Activated B cell treated with CpG ODN at 0.5 μM for 24 hours (primary cell): ENCODE measurements at regions of chr4 and their contacts with region 1.

Region 1: GRCh38 chr4:122930862-122931261 is 8.5 kb upstream of the NUDT6 start:
- DNase-seq: no peak
- ATAC-seq: no peak
- H3K4me3 Mint-ChIP-seq: no peak overlapping the region
- H3K27ac Mint-ChIP-seq: no peak overlapping the region
- H3K4me1 Mint-ChIP-seq: no peaks in the 10 kb centered on the region
- H3K27me3 Mint-ChIP-seq: no peaks in the 10 kb centered on the region
- CTCF ChIP-seq: peak; percentile 16

Region 2: DNA sequence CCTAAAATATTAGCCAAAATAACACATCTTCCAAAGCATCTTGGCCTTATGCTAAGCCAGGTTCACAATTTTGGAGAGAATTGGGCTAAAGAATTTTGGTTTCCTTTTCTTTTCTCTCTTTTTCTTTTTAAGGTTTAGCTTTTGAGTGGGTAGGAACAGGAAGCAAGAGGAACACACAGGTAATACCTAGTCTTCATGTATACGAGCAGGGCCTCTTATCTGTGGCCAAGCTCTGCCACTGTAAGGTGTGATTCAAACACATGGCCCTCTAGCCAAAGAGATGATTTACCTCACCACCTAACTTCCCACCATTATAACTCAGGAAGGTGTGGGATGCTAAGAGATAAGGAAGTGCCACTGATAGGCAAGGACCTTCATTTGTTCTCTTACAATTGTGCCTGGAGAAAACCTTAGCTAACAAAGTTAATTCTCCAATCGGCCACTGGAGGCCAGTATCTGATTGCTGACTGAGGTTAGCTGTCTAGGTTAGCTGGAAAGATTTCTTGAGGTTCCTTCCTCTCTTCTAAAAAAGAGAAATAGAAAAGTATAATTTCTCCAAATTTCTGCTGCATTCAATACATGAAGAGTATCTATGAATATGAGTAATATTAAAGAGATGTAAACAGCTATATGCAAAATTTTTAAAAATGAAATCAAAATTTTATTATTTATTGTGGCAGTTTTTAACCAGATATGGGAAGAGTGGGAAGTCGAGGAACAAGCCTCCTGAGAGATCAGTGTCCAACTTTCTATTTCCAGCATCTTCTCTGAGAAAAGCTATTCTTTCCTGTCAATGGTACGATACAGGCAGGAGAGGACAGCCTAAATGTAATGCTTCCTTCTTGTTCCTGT is 1030.5 kb before region 1 on chr4:
- CTCF ChIA-PET with region 1: interaction called, 6 read pairs
- POLR2A ChIA-PET with region 1: no interaction called
- intact Hi-C with region 1: loop called (anchors 1 kb)
- DNase-seq: no peak
- ATAC-seq: peak; percentile 56
- H3K4me3 Mint-ChIP-seq: no peak overlapping the region
- H3K27ac Mint-ChIP-seq: no peak overlapping the region
- H3K4me1 Mint-ChIP-seq: peaks cover 4% of the 10 kb centered on the region
- H3K27me3 Mint-ChIP-seq: peaks cover 11% of the 10 kb centered on the region
- CTCF ChIP-seq: no peak

Region 3: GRCh38 chr4:122309988-122310626 is 620.8 kb before region 1 on chr4:
- CTCF ChIA-PET with region 1: no interaction called
- POLR2A ChIA-PET with region 1: no interaction called
- intact Hi-C with region 1: loop called (anchors 2 kb)
- DNase-seq: no peak
- ATAC-seq: no peak
- H3K4me3 Mint-ChIP-seq: no peak overlapping the region
- H3K27ac Mint-ChIP-seq: no peak overlapping the region
- H3K4me1 Mint-ChIP-seq: no peaks in the 10 kb centered on the region
- H3K27me3 Mint-ChIP-seq: no peaks in the 10 kb centered on the region
- CTCF ChIP-seq: no peak

Region 4: DNA sequence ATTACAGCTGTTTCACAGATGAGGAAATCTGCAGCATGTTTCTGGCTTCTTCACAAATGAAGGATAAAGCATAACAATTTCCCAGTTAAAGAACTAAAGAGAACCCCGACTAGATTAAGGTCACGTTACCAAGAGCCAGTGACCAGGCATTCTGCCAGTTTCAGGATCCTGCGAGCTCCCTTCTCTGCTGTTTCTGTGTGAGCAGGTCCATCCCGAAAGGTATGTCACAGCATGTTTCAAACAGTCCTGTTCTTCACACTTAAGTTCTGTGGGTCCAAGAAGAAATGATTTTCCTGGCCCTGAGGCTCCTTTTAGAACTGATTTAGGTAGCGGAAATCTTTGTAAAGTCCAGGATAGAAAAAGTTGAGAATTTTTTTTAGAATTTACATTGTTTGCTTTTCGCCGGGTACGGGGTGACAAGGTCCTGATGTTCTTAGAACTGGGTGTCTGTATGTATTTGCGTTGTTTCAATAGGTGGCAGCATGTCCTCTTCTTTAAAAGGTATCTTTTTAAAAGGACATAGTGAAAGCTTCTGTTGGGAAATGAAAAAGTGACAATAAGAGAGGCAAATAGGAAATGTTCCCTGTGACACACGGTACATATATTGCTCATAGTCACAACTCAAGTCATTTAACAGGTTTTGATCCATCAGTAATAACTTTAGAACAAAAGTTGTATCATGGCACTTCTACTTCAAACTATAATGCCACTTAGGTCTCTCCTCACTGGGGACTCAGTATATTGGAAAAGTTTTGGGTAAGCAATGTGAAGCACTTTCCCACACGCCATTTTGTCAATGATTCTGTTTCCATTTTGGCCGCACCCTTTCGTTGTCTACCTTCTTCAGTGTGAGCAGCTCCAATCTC is 328.4 kb before region 1 on chr4:
- CTCF ChIA-PET with region 1: no interaction called
- POLR2A ChIA-PET with region 1: no interaction called
- intact Hi-C with region 1: loop called (anchors 2 kb)
- DNase-seq: no peak
- ATAC-seq: no peak
- H3K4me3 Mint-ChIP-seq: no peak overlapping the region
- H3K27ac Mint-ChIP-seq: no peak overlapping the region
- H3K4me1 Mint-ChIP-seq: no peaks in the 10 kb centered on the region
- H3K27me3 Mint-ChIP-seq: peaks cover 19% of the 10 kb centered on the region
- CTCF ChIP-seq: no peak

Region 5: GRCh38 chr4:122758033-122758432 is 172.8 kb before region 1 on chr4:
- CTCF ChIA-PET with region 1: interaction called, 32 read pairs
- POLR2A ChIA-PET with region 1: no interaction called
- intact Hi-C with region 1: loop called (anchors 1 kb)
- DNase-seq: no peak
- ATAC-seq: no peak
- H3K4me3 Mint-ChIP-seq: no peak overlapping the region
- H3K27ac Mint-ChIP-seq: no peak overlapping the region
- H3K4me1 Mint-ChIP-seq: peaks cover 22% of the 10 kb centered on the region
- H3K27me3 Mint-ChIP-seq: peaks cover 2% of the 10 kb centered on the region
- CTCF ChIP-seq: peak; percentile 74

Region 6: DNA sequence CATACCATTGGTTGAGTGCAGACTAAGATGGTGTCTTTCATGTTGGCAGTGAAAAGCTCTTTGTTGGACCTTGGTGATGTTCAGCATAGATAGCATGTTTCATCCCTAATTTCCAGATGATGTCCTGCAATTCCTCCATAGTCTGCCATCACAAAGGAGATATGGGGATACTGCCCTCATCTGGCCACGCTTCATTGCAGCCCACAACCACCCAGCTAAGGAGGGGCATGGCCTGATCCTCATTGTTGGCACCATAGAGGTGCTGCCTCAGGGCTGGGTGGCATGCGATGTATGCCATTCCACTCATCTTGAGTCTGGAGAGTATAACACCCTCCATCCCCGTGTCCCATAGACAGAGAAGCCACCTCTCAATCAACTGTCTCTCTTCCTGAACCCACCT is 23.1 kb after region 1 on chr4:
- CTCF ChIA-PET with region 1: no interaction called
- POLR2A ChIA-PET with region 1: no interaction called
- intact Hi-C with region 1: no loop called
- DNase-seq: no peak
- ATAC-seq: no peak
- H3K4me3 Mint-ChIP-seq: no peak overlapping the region
- H3K27ac Mint-ChIP-seq: no peak overlapping the region
- H3K4me1 Mint-ChIP-seq: no peaks in the 10 kb centered on the region
- H3K27me3 Mint-ChIP-seq: no peaks in the 10 kb centered on the region
- CTCF ChIP-seq: no peak

Region 7: GRCh38 chr4:123037804-123038203 is 106.9 kb after region 1 on chr4:
- CTCF ChIA-PET with region 1: no interaction called
- POLR2A ChIA-PET with region 1: no interaction called
- intact Hi-C with region 1: no loop called
- DNase-seq: no peak
- ATAC-seq: no peak
- H3K4me3 Mint-ChIP-seq: no peak overlapping the region
- H3K27ac Mint-ChIP-seq: no peak overlapping the region
- H3K4me1 Mint-ChIP-seq: no peaks in the 10 kb centered on the region
- H3K27me3 Mint-ChIP-seq: no peaks in the 10 kb centered on the region
- CTCF ChIP-seq: no peak